ENCODE measurements at regions of chr17 and their contacts with region 1.

Region 1: GRCh38 chr17:31433091-31433790 is 41.8 kb downstream of the RAB11FIP4 start:
- DNase-seq: no peak
- H3K4me3 ChIP-seq: no peak overlapping the region
- H3K27ac ChIP-seq: no peak overlapping the region
- H3K4me1 ChIP-seq: no peaks in the 10 kb centered on the region; the same call in 1 of the 2 replicates
- H3K27me3 ChIP-seq: no peaks in the 10 kb centered on the region
- CTCF ChIP-seq: no peak

Region 2: GRCh38 chr17:31147507-31148202 is 285.6 kb before region 1 on chr17:
- CTCF ChIA-PET with region 1: no interaction called
- POLR2A ChIA-PET with region 1: no interaction called
- intact Hi-C with region 1: no loop called
- DNase-seq: no peak
- H3K4me3 ChIP-seq: no peak overlapping the region
- H3K27ac ChIP-seq: no peak overlapping the region
- H3K4me1 ChIP-seq: no peaks in the 10 kb centered on the region
- H3K27me3 ChIP-seq: no peaks in the 10 kb centered on the region
- CTCF ChIP-seq: no peak

Region 3: GRCh38 chr17:31487648-31488263 is 54.5 kb after region 1 on chr17:
- CTCF ChIA-PET with region 1: no interaction called
- POLR2A ChIA-PET with region 1: no interaction called
- intact Hi-C with region 1: loop called (anchors 10 kb)
- DNase-seq: peak; percentile 88 to 94
- H3K4me3 ChIP-seq: peak overlapping the region; percentile 99
- H3K27ac ChIP-seq: no peak overlapping the region
- H3K4me1 ChIP-seq: peaks cover 32% of the 10 kb centered on the region
- H3K27me3 ChIP-seq: no peaks in the 10 kb centered on the region
- CTCF ChIP-seq: no peak

Region 4: DNA sequence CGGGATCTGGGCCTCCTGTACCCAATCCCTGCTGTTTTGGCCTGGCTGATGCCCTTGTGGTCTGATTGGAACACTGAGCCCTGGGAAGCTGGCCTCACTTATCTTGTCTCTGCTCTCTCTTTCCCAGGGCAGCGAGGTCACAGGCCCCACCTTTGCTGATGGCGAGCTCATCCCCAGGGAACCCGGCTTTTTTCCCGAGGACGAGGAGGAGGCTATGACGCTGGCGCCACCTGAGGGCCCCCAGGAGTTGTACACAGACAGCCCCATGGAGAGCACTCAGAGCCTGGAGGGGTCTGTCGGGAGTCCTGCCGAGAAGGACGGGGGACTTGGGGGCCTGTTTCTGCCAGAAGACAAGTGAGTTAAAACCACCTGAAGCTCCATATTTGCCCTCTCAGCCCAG is 84.3 kb after region 1 on chr17:
- CTCF ChIA-PET with region 1: interaction called, 4 read pairs
- POLR2A ChIA-PET with region 1: no interaction called
- intact Hi-C with region 1: loop called (anchors 1 kb)
- DNase-seq: peak in 1 of 2 experiments; percentile 22
- H3K4me3 ChIP-seq: no peak overlapping the region
- H3K27ac ChIP-seq: no peak overlapping the region
- H3K4me1 ChIP-seq: no peaks in the 10 kb centered on the region
- H3K27me3 ChIP-seq: no peaks in the 10 kb centered on the region
- CTCF ChIP-seq: peak; percentile 65

Region 5: DNA sequence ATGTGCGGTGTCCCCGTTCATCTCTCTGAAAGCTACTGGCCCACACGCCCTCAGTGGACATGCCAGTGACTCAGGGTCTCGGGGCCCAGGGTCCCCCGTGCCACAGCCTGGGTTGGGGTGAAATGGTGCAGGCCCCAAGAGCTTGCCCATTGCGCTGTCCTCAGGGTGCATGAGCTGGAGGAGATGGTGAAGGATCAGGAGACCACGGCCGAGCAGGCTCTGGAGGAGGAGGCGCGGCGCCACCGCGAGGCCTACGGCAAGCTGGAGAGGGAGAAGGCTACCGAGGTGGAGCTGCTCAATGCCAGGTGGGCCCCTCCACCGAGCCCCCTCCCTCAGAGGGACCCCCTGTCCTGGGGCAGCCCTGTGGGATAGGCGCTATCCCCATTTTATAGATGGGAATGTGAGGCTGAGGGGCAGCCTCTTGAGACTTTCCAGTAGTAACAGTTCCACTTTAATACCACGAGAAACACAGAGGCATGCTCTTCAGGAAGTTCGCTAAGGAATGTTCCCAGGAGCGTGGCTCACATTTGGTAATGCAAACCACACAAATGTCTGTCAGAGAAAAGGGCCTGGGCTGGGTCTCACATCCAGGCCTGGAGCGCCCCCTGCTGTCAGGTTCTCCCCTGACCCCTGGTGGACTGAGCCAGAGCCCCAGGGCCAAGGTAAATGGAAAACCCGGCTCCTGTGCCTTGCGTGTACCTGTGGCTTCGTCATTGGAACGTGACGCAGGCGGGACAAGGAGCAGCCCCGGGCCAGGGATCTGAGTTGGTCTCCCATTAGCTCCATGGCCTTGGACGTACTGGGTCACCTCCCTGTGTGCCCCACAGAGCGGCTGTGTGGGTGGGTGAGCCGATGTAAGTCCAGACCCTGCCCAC is 91.9 kb after region 1 on chr17:
- CTCF ChIA-PET with region 1: no interaction called
- POLR2A ChIA-PET with region 1: interaction called, 19 read pairs
- intact Hi-C with region 1: loop called (anchors 1 kb)
- DNase-seq: peak; percentile 85 to 88
- H3K4me3 ChIP-seq: no peak overlapping the region
- H3K27ac ChIP-seq: no peak overlapping the region
- H3K4me1 ChIP-seq: peaks cover 5% of the 10 kb centered on the region; the same call in 1 of the 2 replicates
- H3K27me3 ChIP-seq: no peaks in the 10 kb centered on the region
- CTCF ChIP-seq: peak; percentile 94

Region 6: DNA sequence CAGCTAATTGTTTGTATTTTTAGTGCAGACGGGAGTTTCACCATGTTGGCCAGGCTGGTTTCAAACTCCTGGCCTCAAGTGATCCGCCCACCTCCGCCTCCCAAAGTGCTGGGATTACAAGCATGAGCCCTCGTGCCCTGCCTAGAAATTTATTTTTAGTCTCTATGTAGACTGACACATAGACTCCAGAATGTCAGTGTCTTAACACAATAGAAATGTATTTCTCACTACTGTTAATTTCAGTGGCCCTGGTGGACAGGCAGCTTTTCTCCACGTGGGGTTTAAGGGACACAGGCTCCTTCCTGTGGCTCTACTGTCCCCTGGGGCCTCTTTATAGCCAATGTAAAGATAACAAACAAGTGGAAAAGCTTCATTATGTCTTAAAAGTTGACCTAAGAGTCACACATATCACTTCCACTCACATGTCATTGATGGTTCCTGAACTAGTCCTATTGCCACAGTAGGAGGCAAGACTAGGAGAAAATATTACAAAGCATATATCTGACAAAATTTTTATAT is 382.0 kb after region 1 on chr17:
- CTCF ChIA-PET with region 1: interaction called, 12 read pairs
- POLR2A ChIA-PET with region 1: no interaction called
- intact Hi-C with region 1: no loop called
- DNase-seq: no peak
- H3K4me3 ChIP-seq: no peak overlapping the region
- H3K27ac ChIP-seq: no peak overlapping the region
- H3K4me1 ChIP-seq: no peaks in the 10 kb centered on the region
- H3K27me3 ChIP-seq: no peaks in the 10 kb centered on the region
- CTCF ChIP-seq: no peak

Region 7: GRCh38 chr17:31842183-31843069 is 409.2 kb after region 1 on chr17:
- CTCF ChIA-PET with region 1: no interaction called
- POLR2A ChIA-PET with region 1: no interaction called
- intact Hi-C with region 1: loop called (anchors 1 kb)
- DNase-seq: peak; percentile 43 to 62
- H3K4me3 ChIP-seq: peak overlapping the region; percentile 42; the same call in 1 of the 2 replicates
- H3K27ac ChIP-seq: no peak overlapping the region
- H3K4me1 ChIP-seq: no peaks in the 10 kb centered on the region
- H3K27me3 ChIP-seq: no peaks in the 10 kb centered on the region
- CTCF ChIP-seq: peak; percentile 98

Measured in PC-9 (cell line).